Activated CD4-positive, alpha-beta memory T cell treated with anti-CD3 and anti-CD28 coated beads for 36 hours (primary cell): ENCODE measurements at regions of chr19 and their contacts with region 1.

Region 1: DNA sequence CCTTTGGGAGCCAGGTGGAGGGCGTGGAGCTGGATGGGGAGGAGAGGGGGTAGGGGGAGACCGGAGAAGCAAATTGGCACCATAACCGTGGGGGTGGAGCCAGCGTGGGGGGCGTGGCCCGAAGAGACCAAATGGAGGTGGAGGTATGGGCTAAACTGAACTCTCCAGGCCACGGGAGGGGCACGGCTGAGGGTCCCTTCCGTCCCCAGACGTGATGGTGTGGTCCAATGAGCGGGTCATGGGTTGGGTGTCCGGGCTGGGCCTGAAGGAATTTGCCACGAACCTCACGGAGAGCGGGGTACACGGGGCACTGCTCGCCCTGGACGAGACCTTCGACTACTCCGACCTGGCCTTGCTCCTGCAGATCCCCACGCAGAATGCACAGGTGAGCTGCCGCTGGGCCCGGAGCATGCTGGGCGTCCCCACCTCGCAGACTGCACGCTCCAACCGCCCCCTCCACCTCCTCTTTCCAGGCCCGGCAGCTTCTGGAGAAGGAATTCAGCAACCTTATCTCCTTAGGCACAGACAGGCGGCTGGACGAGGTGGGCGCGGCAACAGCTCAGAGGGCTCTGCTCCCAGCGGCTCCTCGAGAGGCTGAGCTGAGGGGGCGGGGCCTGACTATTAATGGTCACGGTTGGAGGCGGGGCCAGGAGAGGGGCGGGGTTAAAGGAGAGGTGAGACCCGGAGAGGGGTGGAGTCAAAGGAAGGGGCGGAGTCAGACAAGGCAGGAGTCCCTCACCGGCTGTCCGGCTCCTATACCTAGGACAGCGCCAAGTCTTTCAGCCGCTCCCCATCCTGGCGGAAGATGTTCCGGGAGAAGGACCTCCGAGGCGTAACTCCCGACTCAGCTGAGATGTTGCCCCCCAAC is 6.2 kb downstream of the HRC start:
- DNase-seq: peak; percentile 90
- H3K4me3 Mint-ChIP-seq: peak overlapping the region; percentile 46
- H3K27ac Mint-ChIP-seq: no peak overlapping the region
- H3K4me1 Mint-ChIP-seq: peaks cover 28% of the 10 kb centered on the region
- H3K27me3 Mint-ChIP-seq: peaks cover 62% of the 10 kb centered on the region

Region 2: GRCh38 chr19:49073514-49074378 is 75.3 kb before region 1 on chr19:
- CTCF ChIA-PET with region 1: interaction called, 4 read pairs
- POLR2A ChIA-PET with region 1: no interaction called
- intact Hi-C with region 1: loop called (anchors 2 kb)
- DNase-seq: no peak
- H3K4me3 Mint-ChIP-seq: no peak overlapping the region
- H3K27ac Mint-ChIP-seq: no peak overlapping the region
- H3K4me1 Mint-ChIP-seq: peaks cover 11% of the 10 kb centered on the region
- H3K27me3 Mint-ChIP-seq: peaks cover 45% of the 10 kb centered on the region

Region 3: GRCh38 chr19:49127674-49128544 is 21.1 kb before region 1 on chr19:
- CTCF ChIA-PET with region 1: interaction called, 15 read pairs
- POLR2A ChIA-PET with region 1: interaction called, 3 read pairs
- intact Hi-C with region 1: no loop called
- DNase-seq: peak; percentile 97
- H3K4me3 Mint-ChIP-seq: peak overlapping the region; percentile 86
- H3K27ac Mint-ChIP-seq: peak overlapping the region; percentile 78
- H3K4me1 Mint-ChIP-seq: peaks cover 13% of the 10 kb centered on the region
- H3K27me3 Mint-ChIP-seq: no peaks in the 10 kb centered on the region

Region 4: GRCh38 chr19:49173198-49173597 is 24.2 kb after region 1 on chr19:
- CTCF ChIA-PET with region 1: no interaction called
- POLR2A ChIA-PET with region 1: no interaction called
- intact Hi-C with region 1: no loop called
- DNase-seq: no peak
- H3K4me3 Mint-ChIP-seq: no peak overlapping the region
- H3K27ac Mint-ChIP-seq: no peak overlapping the region
- H3K4me1 Mint-ChIP-seq: peaks cover 5% of the 10 kb centered on the region
- H3K27me3 Mint-ChIP-seq: peaks cover 6% of the 10 kb centered on the region